ENCODE measurements at regions of chr20 and their contacts with region 1.

Region 1: DNA sequence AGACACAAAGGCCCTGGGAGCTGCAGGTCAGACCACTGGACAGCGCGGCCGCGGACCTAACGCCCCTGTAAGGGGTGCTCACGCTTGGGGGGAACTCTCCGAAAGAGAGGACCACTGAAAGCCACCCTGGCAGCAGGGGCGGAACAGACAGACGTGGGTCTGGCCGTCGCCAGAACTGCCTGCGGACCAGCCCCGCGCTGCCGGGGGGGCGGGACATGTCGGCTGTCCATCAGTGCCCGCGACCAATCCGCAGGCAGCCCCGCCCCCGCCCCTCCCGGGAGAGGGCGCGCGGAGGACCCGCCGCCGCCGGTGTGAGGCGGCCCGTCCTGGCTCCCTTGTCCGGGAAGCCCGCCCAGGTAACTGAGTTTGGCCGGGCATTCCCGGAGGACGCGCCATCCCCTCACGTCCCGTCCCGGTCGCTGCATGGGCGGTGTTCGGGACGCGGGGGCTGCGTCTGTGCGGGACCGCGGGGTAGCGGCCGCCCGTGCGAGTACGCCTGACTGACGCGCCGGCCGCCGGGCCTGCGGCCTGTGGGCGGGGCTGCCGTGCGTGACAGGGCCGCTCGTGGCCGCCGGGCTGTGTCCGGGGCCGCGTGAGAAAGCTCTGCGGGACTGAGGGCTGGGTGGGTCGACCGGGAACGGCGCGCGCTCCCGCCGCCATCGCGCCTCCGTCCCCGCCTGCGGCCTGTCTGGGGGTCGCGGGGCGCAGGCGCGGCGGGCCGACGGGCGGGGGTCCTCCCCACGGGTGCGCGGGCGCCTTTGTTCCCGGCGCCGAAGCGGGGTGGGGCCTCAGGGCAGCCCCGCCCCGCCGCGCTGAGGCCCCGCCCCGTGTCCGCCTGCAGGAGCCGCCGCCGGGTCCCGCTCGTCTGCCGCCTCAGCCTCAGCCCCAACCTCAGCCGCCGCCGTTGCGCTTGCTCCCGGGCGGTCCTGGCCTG is at the start of gene PLCG1:
- DNase-seq: peak; percentile 66 to 92 (median 82)
- ATAC-seq: peak; percentile 68
- H3K4me3 ChIP-seq: peak within 1 kb of the TSS; percentile 90
- H3K4me3 Mint-ChIP-seq: peak within 1 kb of the TSS; percentile 95
- H3K27ac ChIP-seq: peak within 1 kb of the TSS; percentile 75 to 83
- H3K27ac Mint-ChIP-seq: peak within 1 kb of the TSS; percentile 96
- H3K4me1 ChIP-seq: peaks cover 59% of the 10 kb centered on the region
- H3K4me1 Mint-ChIP-seq: peaks cover 69% of the 10 kb centered on the region
- H3K27me3 ChIP-seq: no peaks in the 10 kb centered on the region
- H3K27me3 Mint-ChIP-seq: no peaks in the 10 kb centered on the region
- CTCF ChIP-seq: no peak
- total RNA-seq, gene PLCG1: 387 to 404 TPM

Region 2: GRCh38 chr20:41149679-41150131 is 12.8 kb after region 1 on chr20:
- CTCF ChIA-PET with region 1: interaction called, 66 read pairs
- POLR2A ChIA-PET with region 1: interaction called, 403 read pairs
- intact Hi-C with region 1: no loop called
- DNase-seq: no peak
- ATAC-seq: no peak
- H3K4me3 ChIP-seq: no peak overlapping the region
- H3K4me3 Mint-ChIP-seq: peak overlapping the region; percentile 7
- H3K27ac ChIP-seq: peak overlapping the region; percentile 56 to 77
- H3K27ac Mint-ChIP-seq: peak overlapping the region; percentile 96
- H3K4me1 ChIP-seq: peaks cover 100% of the 10 kb centered on the region
- H3K4me1 Mint-ChIP-seq: peaks cover 93% of the 10 kb centered on the region
- H3K27me3 ChIP-seq: no peaks in the 10 kb centered on the region
- H3K27me3 Mint-ChIP-seq: no peaks in the 10 kb centered on the region
- CTCF ChIP-seq: no peak

Region 3: DNA sequence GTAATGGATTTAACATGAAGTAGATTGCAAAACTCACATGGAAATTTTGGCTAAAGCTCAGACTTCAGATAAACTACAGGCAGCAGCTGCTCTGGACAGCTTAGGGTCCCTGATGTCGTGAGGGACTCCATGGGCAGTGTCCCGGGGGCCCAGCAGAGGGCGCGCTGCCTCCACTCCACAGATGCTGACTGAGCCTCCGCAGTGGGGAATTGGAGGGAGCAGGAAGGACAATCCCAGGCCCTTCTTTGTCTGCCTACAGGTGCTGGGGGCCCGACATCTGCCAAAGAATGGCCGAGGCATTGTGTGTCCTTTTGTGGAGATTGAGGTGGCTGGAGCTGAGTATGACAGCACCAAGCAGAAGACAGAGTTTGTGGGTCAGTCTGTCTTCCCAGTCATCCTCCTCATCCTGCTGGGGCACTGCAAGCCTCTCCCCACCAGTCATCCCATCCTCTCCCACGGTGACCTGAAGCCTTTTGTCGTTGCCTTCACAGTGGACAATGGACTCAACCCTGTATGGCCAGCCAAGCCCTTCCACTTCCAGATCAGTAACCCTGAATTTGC is 36.3 kb after region 1 on chr20:
- CTCF ChIA-PET with region 1: interaction called, 34 read pairs
- POLR2A ChIA-PET with region 1: interaction called, 12 read pairs
- intact Hi-C with region 1: loop called (anchors 1 to 5 kb)
- DNase-seq: peak; percentile 49 to 81 (median 62)
- ATAC-seq: peak; percentile 89
- H3K4me3 ChIP-seq: no peak overlapping the region
- H3K4me3 Mint-ChIP-seq: no peak overlapping the region
- H3K27ac ChIP-seq: no peak overlapping the region
- H3K27ac Mint-ChIP-seq: peak overlapping the region; percentile 67
- H3K4me1 ChIP-seq: peaks cover 17% of the 10 kb centered on the region
- H3K4me1 Mint-ChIP-seq: peaks cover 15% of the 10 kb centered on the region
- H3K27me3 ChIP-seq: no peaks in the 10 kb centered on the region
- H3K27me3 Mint-ChIP-seq: no peaks in the 10 kb centered on the region
- CTCF ChIP-seq: peak; percentile 92

Region 4: GRCh38 chr20:41339507-41340326 is 202.8 kb after region 1 on chr20:
- CTCF ChIA-PET with region 1: interaction called, 10 read pairs
- POLR2A ChIA-PET with region 1: interaction called, 5 read pairs
- intact Hi-C with region 1: loop called (anchors 1 kb)
- DNase-seq: peak; percentile 73 to 91 (median 83)
- ATAC-seq: peak; percentile 95
- H3K4me3 ChIP-seq: peak overlapping the region; percentile 31
- H3K4me3 Mint-ChIP-seq: peak overlapping the region; percentile 84
- H3K27ac ChIP-seq: no peak overlapping the region
- H3K27ac Mint-ChIP-seq: peak overlapping the region; percentile 10
- H3K4me1 ChIP-seq: peaks cover 14% of the 10 kb centered on the region
- H3K4me1 Mint-ChIP-seq: peaks cover 11% of the 10 kb centered on the region
- H3K27me3 ChIP-seq: no peaks in the 10 kb centered on the region
- H3K27me3 Mint-ChIP-seq: peaks cover 7% of the 10 kb centered on the region
- CTCF ChIP-seq: peak; percentile 100